Activated naive CD4-positive, alpha-beta T cell treated with anti-CD3 and anti-CD28 coated beads for 36 hours (primary cell): ENCODE measurements at regions of chr2 and their contacts with region 1.

Region 1: DNA sequence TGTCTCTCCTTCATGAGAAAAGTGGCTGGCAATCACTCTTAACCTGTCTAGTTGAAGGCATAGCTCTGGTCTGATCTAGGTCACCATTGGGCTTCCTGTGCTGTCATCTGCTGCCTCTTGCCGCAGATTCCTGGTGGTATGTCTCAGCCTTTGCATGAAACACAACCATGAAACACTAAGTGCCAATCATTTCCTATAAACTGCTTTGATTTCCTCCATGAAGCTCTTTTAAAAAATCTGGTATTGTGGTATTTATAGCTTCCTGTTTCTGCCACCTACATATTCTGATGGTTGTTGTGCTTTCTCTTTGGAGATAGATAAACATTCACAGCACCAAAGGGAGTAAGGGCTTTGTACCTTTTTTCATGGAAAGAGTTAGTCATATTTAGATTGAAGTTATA is 120.0 kb upstream of the EPC2 start:
- DNase-seq: peak; percentile 87
- H3K4me3 Mint-ChIP-seq: peak overlapping the region; percentile 14
- H3K27ac Mint-ChIP-seq: peak overlapping the region; percentile 94
- H3K4me1 Mint-ChIP-seq: peaks cover 85% of the 10 kb centered on the region
- H3K27me3 Mint-ChIP-seq: no peaks in the 10 kb centered on the region

Region 2: GRCh38 chr2:148020111-148021058 is 504.1 kb before region 1 on chr2 and contains the start of gene ORC4:
- CTCF ChIA-PET with region 1: no interaction called
- intact Hi-C with region 1: loop called (anchors 1 kb)
- DNase-seq: peak; percentile 99
- H3K4me3 Mint-ChIP-seq: peak within 1 kb of the TSS; percentile 100
- H3K27ac Mint-ChIP-seq: peak within 1 kb of the TSS; percentile 96
- H3K4me1 Mint-ChIP-seq: peaks cover 44% of the 10 kb centered on the region
- H3K27me3 Mint-ChIP-seq: no peaks in the 10 kb centered on the region
- total RNA-seq, gene ORC4: 35.9 to 38.8 TPM

Region 3: GRCh38 chr2:148391324-148391723 is 133.2 kb before region 1 on chr2:
- CTCF ChIA-PET with region 1: no interaction called
- intact Hi-C with region 1: no loop called
- DNase-seq: no peak
- H3K4me3 Mint-ChIP-seq: no peak overlapping the region
- H3K27ac Mint-ChIP-seq: no peak overlapping the region
- H3K4me1 Mint-ChIP-seq: no peaks in the 10 kb centered on the region
- H3K27me3 Mint-ChIP-seq: no peaks in the 10 kb centered on the region

Region 4: GRCh38 chr2:148552675-148553331 is 28.3 kb after region 1 on chr2:
- CTCF ChIA-PET with region 1: interaction called, 6 read pairs
- intact Hi-C with region 1: loop called (anchors 1 kb)
- DNase-seq: peak; percentile 57
- H3K4me3 Mint-ChIP-seq: no peak overlapping the region
- H3K27ac Mint-ChIP-seq: no peak overlapping the region
- H3K4me1 Mint-ChIP-seq: no peaks in the 10 kb centered on the region
- H3K27me3 Mint-ChIP-seq: no peaks in the 10 kb centered on the region

Region 5: GRCh38 chr2:148874868-148875341 is 350.4 kb after region 1 on chr2 and contains the start of gene KIF5C:
- CTCF ChIA-PET with region 1: no interaction called
- intact Hi-C with region 1: loop called (anchors 5 kb)
- DNase-seq: peak; percentile 94
- H3K4me3 Mint-ChIP-seq: peak within 1 kb of the TSS; percentile 88
- H3K27ac Mint-ChIP-seq: peak within 1 kb of the TSS; percentile 53
- H3K4me1 Mint-ChIP-seq: peaks cover 13% of the 10 kb centered on the region
- H3K27me3 Mint-ChIP-seq: peaks cover 19% of the 10 kb centered on the region
- total RNA-seq, gene KIF5C: 18.6 to 24.5 TPM

Region 6: DNA sequence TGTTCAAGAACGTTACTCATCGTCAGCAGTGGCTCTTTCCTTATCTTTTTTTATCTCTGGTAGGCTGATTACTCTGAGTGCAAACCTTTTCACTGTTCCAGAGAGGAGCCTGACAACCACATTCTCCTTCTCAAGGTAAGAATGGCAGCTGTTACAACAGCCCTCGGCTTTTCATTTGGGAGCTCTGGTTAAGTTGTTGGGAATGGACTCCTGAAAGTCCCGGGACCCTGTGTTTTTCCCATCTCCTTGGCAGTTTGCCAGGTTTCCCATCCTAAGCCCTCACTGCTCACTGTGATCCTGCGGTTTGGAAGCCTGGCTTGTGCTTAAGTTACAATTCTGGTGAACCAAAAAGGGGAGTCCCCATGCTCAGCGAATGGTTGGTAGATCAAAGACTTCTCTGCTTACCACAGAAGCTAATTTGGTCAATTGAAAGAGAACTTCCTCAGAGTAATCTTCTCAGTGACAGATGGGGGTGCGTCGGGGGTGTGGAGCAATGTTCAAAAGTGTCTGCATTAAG is 636.2 kb after region 1 on chr2:
- CTCF ChIA-PET with region 1: no interaction called
- intact Hi-C with region 1: loop called (anchors 10 kb)
- DNase-seq: peak; percentile 41
- H3K4me3 Mint-ChIP-seq: no peak overlapping the region
- H3K27ac Mint-ChIP-seq: no peak overlapping the region
- H3K4me1 Mint-ChIP-seq: peaks cover 14% of the 10 kb centered on the region
- H3K27me3 Mint-ChIP-seq: peaks cover 28% of the 10 kb centered on the region